Caco-2 (cell line): ENCODE measurements at regions of chr12 and their contacts with region 1.

Region 1: GRCh38 chr12:54285150-54286041 is 4.9 kb downstream of the HNRNPA1 start:
- DNase-seq: no peak
- H3K4me3 ChIP-seq: no peak overlapping the region
- H3K4me3 Mint-ChIP-seq: no peak overlapping the region
- H3K27ac Mint-ChIP-seq: peak overlapping the region; percentile 80
- H3K4me1 ChIP-seq: peaks cover 38% of the 10 kb centered on the region
- H3K4me1 Mint-ChIP-seq: peaks cover 19% of the 10 kb centered on the region
- H3K27me3 ChIP-seq: no peaks in the 10 kb centered on the region
- H3K27me3 Mint-ChIP-seq: no peaks in the 10 kb centered on the region
- CTCF ChIP-seq: no peak

Region 2: DNA sequence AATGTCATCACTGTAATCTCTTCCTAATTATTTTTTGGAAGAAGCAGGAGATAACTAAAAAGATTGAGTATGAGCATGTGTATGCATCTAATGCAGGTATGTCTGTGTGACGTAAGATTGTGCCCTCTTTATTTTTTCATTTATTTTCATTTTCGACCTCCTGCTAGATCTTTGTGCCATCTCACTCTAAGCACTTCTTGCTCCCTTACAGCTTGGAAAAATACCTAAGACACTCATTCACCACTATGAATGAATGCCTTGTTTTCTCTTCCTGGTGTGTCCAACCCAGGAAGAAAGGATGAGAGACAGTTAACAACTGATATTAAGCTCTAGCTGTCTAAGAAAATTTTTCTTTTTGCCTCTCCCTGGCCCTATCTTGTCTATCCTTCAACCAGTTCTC is 456.8 kb before region 1 on chr12:
- CTCF ChIA-PET with region 1: no interaction called
- POLR2A ChIA-PET with region 1: no interaction called
- intact Hi-C with region 1: no loop called
- DNase-seq: no peak
- H3K4me3 ChIP-seq: no peak overlapping the region
- H3K4me3 Mint-ChIP-seq: no peak overlapping the region
- H3K27ac Mint-ChIP-seq: no peak overlapping the region
- H3K4me1 ChIP-seq: peaks cover 6% of the 10 kb centered on the region
- H3K4me1 Mint-ChIP-seq: peaks cover 4% of the 10 kb centered on the region
- H3K27me3 ChIP-seq: no peaks in the 10 kb centered on the region
- H3K27me3 Mint-ChIP-seq: peaks cover 2% of the 10 kb centered on the region
- CTCF ChIP-seq: no peak

Region 3: DNA sequence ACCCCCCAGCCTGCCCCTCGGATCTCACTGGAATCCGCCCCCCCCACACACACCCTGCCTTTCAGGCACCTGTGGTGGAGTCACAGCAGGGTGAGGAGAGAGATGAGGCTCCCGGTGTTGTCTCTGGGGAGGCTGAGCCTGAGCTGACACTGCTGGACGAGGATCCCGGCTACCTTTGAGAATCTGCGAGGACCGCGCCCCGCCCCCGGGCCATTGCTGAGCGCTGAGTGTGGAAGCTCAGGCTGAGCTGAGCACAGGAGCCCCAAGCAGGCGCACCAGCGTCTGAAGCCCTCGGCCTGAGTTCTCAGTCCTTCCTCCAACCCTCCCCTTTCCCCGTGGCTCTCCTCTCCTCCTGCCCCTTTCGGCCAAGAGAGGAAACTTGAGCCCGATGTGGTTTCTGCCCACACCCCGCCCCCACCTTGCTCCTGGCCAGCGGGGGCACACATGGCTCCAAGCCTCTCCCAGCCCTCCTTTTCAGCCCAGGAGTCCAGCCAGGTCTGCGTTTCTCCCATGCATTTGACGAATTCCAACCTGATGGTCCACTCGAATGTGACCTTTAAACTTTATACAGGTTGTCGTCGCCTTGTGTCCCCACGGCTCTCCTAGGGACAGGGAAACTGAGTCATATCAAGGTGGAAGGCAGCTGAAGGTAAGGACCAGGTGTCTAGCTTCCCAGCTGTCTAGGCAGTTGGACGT is 15.5 kb after region 1 on chr12 and contains the start of gene NFE2:
- CTCF ChIA-PET with region 1: interaction called, 12 read pairs
- POLR2A ChIA-PET with region 1: interaction called, 17 read pairs
- intact Hi-C with region 1: loop called (anchors 1 kb)
- DNase-seq: peak; percentile 91
- H3K4me3 ChIP-seq: peak within 1 kb of the TSS; percentile 59
- H3K4me3 Mint-ChIP-seq: peak within 1 kb of the TSS; percentile 79
- H3K27ac Mint-ChIP-seq: peak within 1 kb of the TSS; percentile 60
- H3K4me1 ChIP-seq: peaks cover 35% of the 10 kb centered on the region
- H3K4me1 Mint-ChIP-seq: peaks cover 42% of the 10 kb centered on the region
- H3K27me3 ChIP-seq: no peaks in the 10 kb centered on the region
- H3K27me3 Mint-ChIP-seq: no peaks in the 10 kb centered on the region
- CTCF ChIP-seq: no peak
- total RNA-seq, gene NFE2: 5.7 and 6.2 TPM in 2 replicates

Region 4: GRCh38 chr12:54352022-54352531 is 66.7 kb after region 1 on chr12:
- CTCF ChIA-PET with region 1: no interaction called
- POLR2A ChIA-PET with region 1: no interaction called
- intact Hi-C with region 1: no loop called
- DNase-seq: no peak
- H3K4me3 ChIP-seq: no peak overlapping the region
- H3K4me3 Mint-ChIP-seq: no peak overlapping the region
- H3K27ac Mint-ChIP-seq: no peak overlapping the region
- H3K4me1 ChIP-seq: no peaks in the 10 kb centered on the region
- H3K4me1 Mint-ChIP-seq: peaks cover 7% of the 10 kb centered on the region
- H3K27me3 ChIP-seq: no peaks in the 10 kb centered on the region
- H3K27me3 Mint-ChIP-seq: no peaks in the 10 kb centered on the region
- CTCF ChIP-seq: no peak